ENCODE measurements at regions of chr18 and their contacts with region 1.

Region 1: DNA sequence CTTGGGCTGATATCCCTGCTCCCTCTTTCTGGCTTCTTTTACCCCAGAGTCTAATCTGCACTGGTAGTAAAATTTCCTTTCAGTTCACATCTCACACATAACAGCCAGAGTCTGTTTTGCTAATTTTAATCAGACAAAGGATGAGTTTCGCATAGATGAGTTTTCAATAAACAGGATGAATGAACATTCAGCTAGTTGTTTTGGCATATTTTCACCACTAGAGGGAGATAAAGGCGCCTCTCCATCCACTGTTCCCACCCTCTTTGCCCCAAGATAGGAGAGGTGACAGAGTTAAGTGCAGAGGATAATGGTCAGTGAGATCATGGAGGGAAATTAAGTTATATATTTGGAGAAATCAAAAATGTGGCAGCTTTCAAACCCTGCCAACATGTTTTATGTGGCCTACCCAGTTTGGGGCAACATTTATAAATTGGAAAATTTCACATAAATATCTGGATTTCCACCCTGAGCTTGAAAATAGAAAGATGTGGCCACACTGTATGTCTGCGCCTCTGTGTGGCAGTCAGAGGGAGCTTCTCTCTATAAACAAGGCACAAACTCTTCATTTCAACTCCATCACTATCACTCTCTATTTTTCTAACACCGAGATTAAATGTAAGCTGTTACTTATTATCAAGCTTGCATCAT is 48.5 kb upstream of the DTNA start:
- DNase-seq: peak; percentile 33
- H3K4me3 Mint-ChIP-seq: no peak overlapping the region
- H3K27ac Mint-ChIP-seq: peak overlapping the region; percentile 41
- H3K4me1 Mint-ChIP-seq: peaks cover 30% of the 10 kb centered on the region
- H3K27me3 Mint-ChIP-seq: no peaks in the 10 kb centered on the region
- CTCF ChIP-seq: peak; percentile 83

Region 2: DNA sequence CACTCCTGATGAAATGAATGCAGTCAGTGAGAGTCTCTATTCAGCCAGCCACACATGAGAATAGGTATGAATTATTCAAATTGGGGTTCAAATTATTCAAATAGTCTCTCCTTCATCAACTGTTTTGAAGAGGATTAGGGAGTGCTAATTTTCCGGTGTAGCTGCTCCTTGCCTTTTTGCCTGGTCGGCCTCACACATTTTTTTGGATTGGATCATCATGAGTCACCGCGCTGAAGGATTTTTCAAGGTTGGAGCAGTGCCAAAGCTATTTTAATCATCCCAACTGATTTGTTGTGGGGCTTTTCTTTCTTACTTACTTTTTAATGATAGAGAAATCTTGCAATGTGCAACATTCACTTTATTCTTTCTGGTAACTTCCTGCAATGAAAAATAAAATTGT is 46.1 kb after region 1 on chr18:
- CTCF ChIA-PET with region 1: interaction called, 5 read pairs
- intact Hi-C with region 1: loop called (anchors 5 kb)
- DNase-seq: peak; percentile 67
- H3K4me3 Mint-ChIP-seq: no peak overlapping the region
- H3K27ac Mint-ChIP-seq: peak overlapping the region; percentile 37
- H3K4me1 Mint-ChIP-seq: peaks cover 23% of the 10 kb centered on the region
- H3K27me3 Mint-ChIP-seq: no peaks in the 10 kb centered on the region
- CTCF ChIP-seq: no peak

Region 3: GRCh38 chr18:34723143-34723542 is 61.6 kb after region 1 on chr18:
- CTCF ChIA-PET with region 1: no interaction called
- intact Hi-C with region 1: loop called (anchors 5 kb)
- DNase-seq: no peak
- H3K4me3 Mint-ChIP-seq: no peak overlapping the region
- H3K27ac Mint-ChIP-seq: no peak overlapping the region
- H3K4me1 Mint-ChIP-seq: peaks cover 15% of the 10 kb centered on the region
- H3K27me3 Mint-ChIP-seq: no peaks in the 10 kb centered on the region
- CTCF ChIP-seq: no peak

Region 4: DNA sequence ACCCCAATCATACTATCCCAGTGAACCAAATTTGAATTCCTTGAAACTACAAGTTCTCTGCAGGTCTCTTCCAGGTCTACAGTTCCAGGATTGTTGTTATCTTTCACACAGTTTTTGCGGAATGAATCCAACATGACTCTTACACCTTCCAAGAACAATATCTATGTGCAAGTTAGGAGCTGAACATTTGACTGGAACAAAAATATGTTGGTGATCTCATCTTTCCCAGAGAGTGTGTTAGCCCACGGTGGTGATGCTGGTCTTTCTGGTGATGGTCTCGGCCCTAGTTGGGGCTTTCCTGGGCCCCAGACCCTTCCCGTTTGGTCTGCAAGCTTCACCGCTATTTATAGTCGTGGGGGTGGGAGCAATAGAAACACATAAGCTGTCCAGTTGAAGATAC is 1993.5 kb after region 1 on chr18:
- CTCF ChIA-PET with region 1: interaction called, 10 read pairs
- intact Hi-C with region 1: no loop called
- DNase-seq: no peak
- H3K4me3 Mint-ChIP-seq: no peak overlapping the region
- H3K27ac Mint-ChIP-seq: no peak overlapping the region
- H3K4me1 Mint-ChIP-seq: peaks cover 19% of the 10 kb centered on the region
- H3K27me3 Mint-ChIP-seq: peaks cover 46% of the 10 kb centered on the region
- CTCF ChIP-seq: no peak